Dorsolateral prefrontal cortex (tissue), 120 donors: ENCODE measurements at regions of chrX and their contacts with region 1.

Region 1: GRCh38 chrX:74015379-74016019 is 288.5 kb upstream of the ZCCHC13 start:
- DNase-seq: peak in 8 of 10 donors; percentile 24 to 74 (median 56)
- H3K4me3 ChIP-seq: no peak overlapping the region
- H3K27ac ChIP-seq: no peak overlapping the region
- H3K27me3 ChIP-seq: no peaks in the 10 kb centered on the region
- CTCF ChIP-seq: peak in 55 of 56 donors; percentile 50 to 95 (median 82)

Region 2: GRCh38 chrX:73943693-73944562 is 71.6 kb before region 1 on chrX:
- intact Hi-C with region 1: loop called in 1 of 2 experiments (anchors 10 kb)
- DNase-seq: peak; percentile 86 to 94 (median 92)
- H3K4me3 ChIP-seq: peak overlapping the region; percentile 47 to 97 (median 80)
- H3K27ac ChIP-seq: peak overlapping the region in 56 of 59 donors; percentile 24 to 92 (median 83)
- H3K27me3 ChIP-seq: peaks cover 0 to 6% (median 0%) of the 10 kb centered on the region in 45 donors
- CTCF ChIP-seq: peak in 37 of 56 donors; percentile 10 to 59 (median 30)

Region 3: DNA sequence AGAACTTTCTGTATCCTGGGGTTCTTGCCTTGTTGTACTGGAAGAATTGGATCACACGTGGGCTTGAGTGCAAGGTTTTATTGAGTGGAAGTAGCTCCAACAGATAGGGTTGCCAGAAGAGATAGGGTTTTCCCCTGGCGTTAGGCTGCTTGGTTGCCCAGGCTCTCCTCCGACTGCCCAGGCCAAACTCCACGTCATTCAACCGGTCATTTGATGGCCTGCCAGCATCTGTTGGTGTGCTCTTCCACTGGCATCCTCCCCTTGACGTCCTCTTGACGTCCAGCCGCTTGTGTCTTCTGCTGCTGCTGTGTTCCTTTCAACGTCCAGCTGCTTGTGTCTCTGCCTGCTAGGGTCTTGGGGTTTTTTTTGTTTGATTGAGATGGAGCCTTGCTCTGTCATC is 51.8 kb before region 1 on chrX:
- intact Hi-C with region 1: loop called in 1 of 2 experiments (anchors 10 kb)
- DNase-seq: peak in 1 of 10 donors; percentile 20
- H3K4me3 ChIP-seq: no peak overlapping the region
- H3K27ac ChIP-seq: no peak overlapping the region
- H3K27me3 ChIP-seq: no peaks in the 10 kb centered on the region
- CTCF ChIP-seq: no peak

Region 4: GRCh38 chrX:73987166-73987565 is 28.3 kb before region 1 on chrX:
- intact Hi-C with region 1: no loop called
- DNase-seq: no peak
- H3K4me3 ChIP-seq: no peak overlapping the region
- H3K27ac ChIP-seq: no peak overlapping the region
- H3K27me3 ChIP-seq: no peaks in the 10 kb centered on the region
- CTCF ChIP-seq: no peak